ENCODE measurements at regions of chr12 and their contacts with region 1.

Region 1: GRCh38 chr12:19177754-19178153 is 48.2 kb downstream of the PLEKHA5 start:
- DNase-seq: no peak
- ATAC-seq: no peak
- H3K4me3 ChIP-seq: no peak overlapping the region
- H3K27ac ChIP-seq: no peak overlapping the region
- H3K4me1 ChIP-seq: no peaks in the 10 kb centered on the region
- H3K27me3 ChIP-seq: no peaks in the 10 kb centered on the region
- CTCF ChIP-seq: no peak

Region 2: GRCh38 chr12:18849080-18849479 is 328.7 kb before region 1 on chr12:
- intact Hi-C with region 1: no loop called
- DNase-seq: peak in 1 of 4 donors; percentile 26
- ATAC-seq: peak; percentile 88
- H3K4me3 ChIP-seq: no peak overlapping the region
- H3K27ac ChIP-seq: no peak overlapping the region
- H3K4me1 ChIP-seq: no peaks in the 10 kb centered on the region
- H3K27me3 ChIP-seq: no peaks in the 10 kb centered on the region
- CTCF ChIP-seq: no peak

Region 3: DNA sequence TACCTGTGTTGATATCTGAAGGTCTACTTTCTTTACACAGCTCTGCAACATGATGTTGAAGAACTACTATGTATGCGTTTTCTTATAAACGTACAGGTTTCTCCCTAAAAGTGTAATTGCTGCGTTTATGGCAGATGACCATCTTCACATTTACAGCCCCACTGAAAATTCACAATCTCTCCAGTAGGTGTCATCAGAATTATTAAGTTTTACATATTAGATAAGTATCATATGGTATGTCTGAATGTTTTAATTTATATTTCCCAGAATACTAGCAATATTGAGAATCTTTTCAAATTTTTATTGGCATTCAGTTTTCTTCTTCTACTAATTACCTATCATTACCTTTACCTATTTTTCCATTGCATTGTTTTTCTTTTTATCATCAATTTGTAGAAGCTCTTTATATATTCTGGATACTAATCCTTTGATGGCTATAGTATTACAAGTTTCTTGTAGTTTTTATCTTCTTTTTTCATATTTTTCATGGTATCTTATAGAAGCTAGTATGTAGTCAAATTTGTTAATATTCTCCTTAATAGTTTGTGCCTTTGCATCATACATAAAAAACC is 316.4 kb before region 1 on chr12:
- intact Hi-C with region 1: loop called in 1 of 2 experiments (anchors 10 kb)
- DNase-seq: no peak
- ATAC-seq: peak; percentile 40
- H3K4me3 ChIP-seq: no peak overlapping the region
- H3K27ac ChIP-seq: no peak overlapping the region
- H3K4me1 ChIP-seq: no peaks in the 10 kb centered on the region
- H3K27me3 ChIP-seq: no peaks in the 10 kb centered on the region
- CTCF ChIP-seq: peak in 1 of 2 donors; percentile 52

Measured in left lung (tissue), 14 donors.